ENCODE measurements at regions of chr6 and their contacts with region 1.

Region 1: GRCh38 chr6:159654483-159655098 is 38.5 kb downstream of the SOD2 start:
- DNase-seq: no peak
- ATAC-seq: peak; percentile 54
- H3K4me3 ChIP-seq: no peak overlapping the region
- H3K27ac ChIP-seq: no peak overlapping the region
- H3K4me1 ChIP-seq: no peaks in the 10 kb centered on the region
- H3K27me3 ChIP-seq: no peaks in the 10 kb centered on the region

Region 2: DNA sequence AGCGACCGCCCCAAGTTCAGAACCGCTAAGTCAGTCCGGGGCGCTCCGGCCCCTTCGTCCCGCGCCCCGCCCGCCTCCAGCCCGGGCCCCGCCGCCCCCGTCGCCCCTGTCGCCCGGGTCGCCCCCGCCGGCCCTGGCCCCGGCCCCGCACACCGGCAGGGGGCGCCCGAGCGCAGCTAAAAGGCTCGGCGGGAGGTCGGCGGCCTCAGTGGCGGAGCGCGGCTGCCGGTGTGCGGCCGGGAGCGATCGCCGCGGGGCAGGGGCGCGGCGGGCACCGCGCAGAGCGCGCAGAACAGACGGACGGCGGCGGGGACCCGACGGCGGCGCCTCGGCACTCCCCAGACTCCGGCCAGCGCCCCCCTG is 485.4 kb before region 1 on chr6 and contains the start of gene FNDC1:
- intact Hi-C with region 1: loop called (anchors 2 kb)
- DNase-seq: peak; percentile 64 to 85
- ATAC-seq: peak; percentile 61
- H3K4me3 ChIP-seq: peak within 1 kb of the TSS; percentile 30 to 40
- H3K27ac ChIP-seq: no peak within 1 kb of the TSS
- H3K4me1 ChIP-seq: no peaks in the 10 kb centered on the region
- H3K27me3 ChIP-seq: no peaks in the 10 kb centered on the region
- total RNA-seq, gene FNDC1: 1.4 to 2.5 TPM